Endothelial cell of umbilical vein (primary cell): ENCODE measurements at regions of chr2 and their contacts with region 1.

Region 1: DNA sequence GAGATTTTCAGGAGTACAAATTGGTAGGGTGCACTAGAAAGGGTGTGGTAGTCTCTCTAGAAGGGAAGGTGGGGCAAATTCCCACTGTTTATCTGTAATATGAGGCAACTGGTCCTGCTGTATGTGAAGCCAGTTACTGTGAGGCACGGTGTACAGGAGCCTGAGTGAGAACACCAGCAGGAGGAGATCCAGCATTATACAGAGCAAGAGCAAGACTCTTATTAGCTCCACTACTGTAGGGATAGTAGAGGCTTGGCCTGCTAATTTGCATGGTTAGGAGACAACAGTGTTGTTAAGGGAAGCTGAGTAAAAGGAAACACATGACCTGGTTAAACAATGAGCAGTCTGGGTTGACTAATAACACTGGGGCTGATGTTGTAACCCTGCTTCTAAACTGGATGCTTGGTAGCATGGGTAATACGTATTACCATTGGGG is 76.3 kb upstream of the WDSUB1 start:
- DNase-seq: peak; percentile 98
- H3K4me3 ChIP-seq: no peak overlapping the region
- H3K27ac ChIP-seq: peak overlapping the region; percentile 91
- H3K4me1 ChIP-seq: peaks cover 15% of the 10 kb centered on the region
- H3K27me3 ChIP-seq: no peaks in the 10 kb centered on the region
- CTCF ChIP-seq: peak; percentile 4 to 26
- POLR2A ChIP-seq: no peak

Region 2: GRCh38 chr2:159615140-159615951 is 252.5 kb after region 1 on chr2:
- CTCF ChIA-PET with region 1: no interaction called
- POLR2A ChIA-PET with region 1: interaction called, 4 read pairs
- dilution Hi-C with region 1: no loop called
- intact Hi-C with region 1: loop called (anchors 2 kb)
- DNase-seq: peak; percentile 96
- H3K4me3 ChIP-seq: peak overlapping the region; percentile 49 to 100 (median 100)
- H3K27ac ChIP-seq: peak overlapping the region; percentile 100
- H3K4me1 ChIP-seq: peaks cover 30% of the 10 kb centered on the region
- H3K27me3 ChIP-seq: no peaks in the 10 kb centered on the region
- CTCF ChIP-seq: no peak
- POLR2A ChIP-seq: peak; percentile 82

Region 3: DNA sequence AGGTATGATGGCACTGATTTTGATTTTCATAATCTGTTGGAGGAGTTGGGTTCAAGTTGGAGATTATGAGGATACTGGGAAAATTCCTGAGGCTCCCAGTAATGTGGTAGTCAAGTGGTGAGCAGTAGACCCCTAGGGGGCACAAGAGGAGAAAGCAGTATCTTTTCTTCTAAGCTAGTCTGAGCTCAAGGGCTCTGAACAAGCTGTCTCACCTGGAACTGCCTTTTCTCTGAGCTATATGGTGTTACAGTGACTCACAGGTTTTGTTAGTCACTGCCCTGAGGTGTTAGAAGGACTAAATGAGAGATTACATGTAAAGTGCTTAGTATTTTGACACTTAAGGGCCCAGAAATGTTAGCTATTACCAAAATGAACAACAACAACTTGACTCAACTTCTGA is 393.0 kb after region 1 on chr2:
- CTCF ChIA-PET with region 1: no interaction called
- POLR2A ChIA-PET with region 1: no interaction called
- dilution Hi-C with region 1: no loop called
- intact Hi-C with region 1: loop called (anchors 2 kb)
- DNase-seq: peak; percentile 49
- H3K4me3 ChIP-seq: no peak overlapping the region
- H3K27ac ChIP-seq: no peak overlapping the region
- H3K4me1 ChIP-seq: peaks cover 14% of the 10 kb centered on the region
- H3K27me3 ChIP-seq: no peaks in the 10 kb centered on the region
- CTCF ChIP-seq: peak; percentile 36 to 47
- POLR2A ChIP-seq: no peak